Activated CD4-positive, alpha-beta memory T cell treated with anti-CD3 and anti-CD28 coated beads for 36 hours (primary cell): ENCODE measurements at regions of chr5 and their contacts with region 1.

Region 1: GRCh38 chr5:139517683-139518564 is 35.4 kb upstream of the STING1 start:
- DNase-seq: peak; percentile 93
- H3K4me3 Mint-ChIP-seq: peak overlapping the region; percentile 82
- H3K27ac Mint-ChIP-seq: peak overlapping the region; percentile 81
- H3K4me1 Mint-ChIP-seq: peaks cover 32% of the 10 kb centered on the region
- H3K27me3 Mint-ChIP-seq: no peaks in the 10 kb centered on the region

Region 2: GRCh38 chr5:139422307-139422893 is 95.5 kb before region 1 on chr5:
- CTCF ChIA-PET with region 1: interaction called, 443 read pairs
- POLR2A ChIA-PET with region 1: interaction called, 11 read pairs
- intact Hi-C with region 1: loop called (anchors 1 kb)
- DNase-seq: peak; percentile 50
- H3K4me3 Mint-ChIP-seq: no peak overlapping the region
- H3K27ac Mint-ChIP-seq: peak overlapping the region; percentile 83
- H3K4me1 Mint-ChIP-seq: peaks cover 10% of the 10 kb centered on the region
- H3K27me3 Mint-ChIP-seq: no peaks in the 10 kb centered on the region

Region 3: DNA sequence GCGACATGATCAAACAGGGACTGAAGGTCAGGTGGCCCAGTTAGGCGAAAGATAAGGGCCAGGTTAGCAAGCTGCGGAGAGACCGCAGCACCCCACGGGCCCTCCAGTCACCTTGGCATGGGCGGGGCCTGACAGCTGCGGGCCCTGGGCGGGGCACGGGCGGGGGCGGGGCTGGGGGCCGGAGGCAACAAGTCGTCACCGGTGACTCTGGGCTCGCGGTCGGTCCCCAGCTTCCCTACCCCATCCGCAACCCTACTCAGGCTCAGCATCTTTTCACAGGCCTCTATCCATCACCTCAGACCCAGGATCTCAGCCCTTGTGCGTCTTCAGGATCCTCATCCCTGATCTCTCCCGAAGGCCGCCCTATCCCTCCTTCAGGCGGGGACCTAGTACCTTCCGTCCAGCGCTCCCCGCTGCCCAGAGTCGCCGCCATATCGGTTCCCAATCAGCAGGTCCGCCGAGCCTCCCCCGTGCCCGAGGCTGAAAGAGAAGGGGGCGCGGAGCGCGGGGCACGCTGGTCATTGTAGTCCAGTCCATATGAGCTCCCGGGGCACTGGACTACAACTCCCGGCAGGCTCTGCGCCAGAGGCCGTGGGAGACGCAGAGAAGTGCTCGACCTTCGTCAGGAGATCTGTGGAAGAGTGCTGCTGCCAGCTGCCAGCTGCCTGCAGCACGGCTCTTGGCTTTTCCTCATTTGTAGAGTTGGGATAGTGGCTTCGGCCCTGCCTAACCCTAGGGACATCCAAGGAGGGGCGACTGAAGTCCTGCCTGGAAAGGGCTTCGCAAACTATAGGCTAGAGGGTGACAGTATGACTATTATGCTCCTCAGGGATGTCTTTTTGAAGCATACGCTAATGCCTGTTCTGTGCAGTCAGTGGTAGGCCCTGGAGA is 78.7 kb before region 1 on chr5 and contains the start of gene DNAJC18:
- CTCF ChIA-PET with region 1: interaction called, 51 read pairs
- POLR2A ChIA-PET with region 1: interaction called, 4 read pairs
- intact Hi-C with region 1: loop called (anchors 5 kb)
- DNase-seq: peak; percentile 96
- H3K4me3 Mint-ChIP-seq: peak within 1 kb of the TSS; percentile 98
- H3K27ac Mint-ChIP-seq: peak within 1 kb of the TSS; percentile 99
- H3K4me1 Mint-ChIP-seq: peaks cover 62% of the 10 kb centered on the region
- H3K27me3 Mint-ChIP-seq: no peaks in the 10 kb centered on the region
- total RNA-seq, gene DNAJC18: 54.1 to 56.0 TPM

Region 4: GRCh38 chr5:139474890-139475791 is 42.8 kb before region 1 on chr5:
- CTCF ChIA-PET with region 1: interaction called, 55 read pairs
- POLR2A ChIA-PET with region 1: interaction called, 6 read pairs
- intact Hi-C with region 1: loop called (anchors 5 kb)
- DNase-seq: peak; percentile 55
- H3K4me3 Mint-ChIP-seq: peak overlapping the region; percentile 20
- H3K27ac Mint-ChIP-seq: peak overlapping the region; percentile 93
- H3K4me1 Mint-ChIP-seq: peaks cover 89% of the 10 kb centered on the region
- H3K27me3 Mint-ChIP-seq: no peaks in the 10 kb centered on the region

Region 5: GRCh38 chr5:139492700-139493192 is 25.2 kb before region 1 on chr5:
- CTCF ChIA-PET with region 1: interaction called, 22 read pairs
- POLR2A ChIA-PET with region 1: interaction called, 9 read pairs
- intact Hi-C with region 1: no loop called
- DNase-seq: no peak
- H3K4me3 Mint-ChIP-seq: no peak overlapping the region
- H3K27ac Mint-ChIP-seq: no peak overlapping the region
- H3K4me1 Mint-ChIP-seq: peaks cover 35% of the 10 kb centered on the region
- H3K27me3 Mint-ChIP-seq: no peaks in the 10 kb centered on the region

Region 6: DNA sequence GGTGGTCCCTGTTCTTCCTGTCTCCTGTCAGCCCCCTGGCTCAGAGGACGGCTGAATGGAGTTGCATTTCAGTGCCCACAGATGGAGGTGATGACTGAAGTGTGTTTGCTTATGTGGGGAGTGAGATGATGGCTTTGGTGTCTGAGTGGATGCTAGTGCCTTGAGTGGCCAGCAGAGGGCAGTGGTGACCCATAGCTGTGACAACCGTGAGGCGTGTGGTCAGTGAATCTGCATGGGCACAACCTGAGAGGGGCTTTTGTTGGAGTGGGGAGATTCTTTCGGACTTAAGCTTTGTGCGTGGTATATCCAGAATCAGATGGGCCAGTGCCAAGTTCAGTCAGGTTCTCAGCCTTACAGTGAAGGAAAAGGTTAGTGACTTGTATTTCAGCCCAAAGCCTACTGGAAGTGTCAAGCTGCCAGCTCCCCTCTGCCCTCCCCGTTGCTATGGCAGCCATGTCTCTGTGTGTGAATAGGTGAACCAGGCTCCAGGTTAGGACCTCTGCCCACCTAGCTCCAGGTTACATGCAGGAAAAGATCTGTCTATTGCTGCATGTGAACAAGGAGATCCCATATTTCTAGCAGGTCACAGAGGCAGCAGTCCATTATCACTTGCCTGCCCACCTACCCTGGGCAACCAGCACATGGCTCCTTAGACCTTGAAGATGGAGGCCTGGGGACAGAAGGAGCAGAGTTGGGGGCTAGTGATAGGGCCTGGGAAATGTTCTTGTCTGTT is 115.5 kb after region 1 on chr5:
- CTCF ChIA-PET with region 1: interaction called, 4 read pairs
- POLR2A ChIA-PET with region 1: no interaction called
- intact Hi-C with region 1: loop called (anchors 5 kb)
- DNase-seq: peak; percentile 76
- H3K4me3 Mint-ChIP-seq: no peak overlapping the region
- H3K27ac Mint-ChIP-seq: peak overlapping the region; percentile 23
- H3K4me1 Mint-ChIP-seq: peaks cover 40% of the 10 kb centered on the region
- H3K27me3 Mint-ChIP-seq: no peaks in the 10 kb centered on the region